ENCODE measurements at regions of chr9 and their contacts with region 1.

Region 1: GRCh38 chr9:113602126-113603044 is 138.9 kb downstream of the RGS3 start:
- DNase-seq: peak; percentile 63
- H3K4me3 ChIP-seq: no peak overlapping the region
- H3K27ac ChIP-seq: no peak overlapping the region
- H3K4me1 ChIP-seq: peaks cover 45% of the 10 kb centered on the region
- H3K27me3 ChIP-seq: no peaks in the 10 kb centered on the region
- CTCF ChIP-seq: no peak
- POLR2A ChIP-seq: no peak

Region 2: DNA sequence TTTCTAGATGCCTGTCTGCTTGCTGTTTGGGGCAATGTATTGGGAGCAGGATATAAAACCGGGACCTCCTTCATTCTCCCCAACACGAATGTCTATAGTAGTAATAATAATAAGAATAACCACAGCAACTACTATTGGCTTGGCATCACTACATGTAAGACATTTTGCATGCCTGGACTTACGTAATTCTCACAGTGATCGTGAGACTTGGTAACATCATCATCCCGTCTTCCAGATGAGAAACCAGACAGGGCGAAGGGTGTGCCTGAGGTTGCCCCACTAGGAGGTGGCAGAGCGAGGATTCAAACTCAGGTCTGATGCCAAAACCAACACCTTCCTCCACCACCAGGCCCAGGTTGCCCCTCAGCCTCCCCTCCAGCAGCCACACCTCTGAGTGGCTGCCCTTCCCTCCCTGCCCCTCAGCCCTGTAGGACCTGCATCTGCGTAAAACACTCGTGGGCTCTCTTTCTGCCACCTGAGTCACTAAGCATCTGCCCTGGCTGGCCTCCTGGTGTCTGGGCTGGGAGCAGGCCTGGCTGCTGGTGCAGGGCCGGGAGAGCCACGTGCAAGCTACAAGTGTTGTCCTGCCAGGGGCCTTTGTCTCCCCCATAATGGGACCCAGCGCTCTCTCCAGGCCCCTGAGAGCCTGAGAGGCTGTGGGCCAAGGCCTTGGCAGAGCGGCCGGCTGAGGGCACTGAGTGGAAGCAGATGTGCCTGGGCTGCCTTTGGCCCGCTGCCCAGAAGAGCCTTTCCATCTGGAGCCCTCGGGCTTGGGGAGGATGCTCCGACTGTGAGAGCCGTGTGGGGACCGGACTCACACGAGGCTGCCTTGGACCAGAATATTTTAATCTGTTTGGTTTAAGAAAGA is 46.4 kb after region 1 on chr9:
- CTCF ChIA-PET with region 1: interaction called, 1,173 read pairs
- POLR2A ChIA-PET with region 1: interaction called, 6 read pairs
- dilution Hi-C with region 1: loop called (anchors 10 kb)
- intact Hi-C with region 1: loop called (anchors 1 kb)
- DNase-seq: peak; percentile 64
- H3K4me3 ChIP-seq: no peak overlapping the region
- H3K27ac ChIP-seq: no peak overlapping the region
- H3K4me1 ChIP-seq: peaks cover 21% of the 10 kb centered on the region
- H3K27me3 ChIP-seq: no peaks in the 10 kb centered on the region
- CTCF ChIP-seq: no peak
- POLR2A ChIP-seq: no peak